ENCODE measurements at regions of chr7 and their contacts with region 1.

Region 1: GRCh38 chr7:33932832-33933468 is 27.6 kb downstream of the BMPER start:
- DNase-seq: no peak
- ATAC-seq: peak; percentile 79
- H3K4me3 ChIP-seq: no peak overlapping the region
- H3K27ac ChIP-seq: no peak overlapping the region
- H3K4me1 ChIP-seq: no peaks in the 10 kb centered on the region
- H3K27me3 ChIP-seq: peaks cover 1% of the 10 kb centered on the region in 2 experiments; a peak in 3 of 4 replicates
- CTCF ChIP-seq: peak; percentile 89 to 94 (median 90)
- EP300 ChIP-seq: no peak
- POLR2A ChIP-seq: no peak
- RAD21 ChIP-seq: peak; percentile 73

Region 2: DNA sequence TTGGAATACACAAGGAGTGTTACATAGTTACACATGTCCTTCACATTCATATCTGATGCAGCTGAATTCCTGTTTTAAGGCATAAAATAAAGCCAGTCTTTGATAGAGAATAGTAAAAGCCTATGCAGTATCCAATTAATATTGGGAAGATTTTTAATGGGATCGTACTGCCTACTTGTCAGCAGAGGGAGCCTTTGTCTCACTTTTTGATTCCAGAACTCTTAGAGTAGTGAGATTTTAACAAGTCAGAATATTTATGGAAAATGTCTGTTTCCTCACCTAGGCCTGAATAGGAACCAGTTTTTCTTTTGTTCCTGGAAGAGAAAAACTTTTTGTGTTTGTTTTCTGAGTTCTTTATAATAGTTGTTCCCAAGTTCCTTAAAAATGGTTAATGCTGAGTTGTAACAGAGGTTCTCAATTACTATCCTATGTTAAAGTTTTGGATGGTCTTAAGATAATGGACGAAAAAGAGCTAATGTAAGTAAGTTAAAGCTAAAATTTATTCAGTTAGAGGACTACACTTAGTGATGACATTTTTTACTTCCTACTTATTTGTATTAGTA is 689.5 kb before region 1 on chr7:
- CTCF ChIA-PET with region 1: interaction called, 9 read pairs
- POLR2A ChIA-PET with region 1: no interaction called
- RAD21 ChIA-PET with region 1: interaction called, 5 read pairs
- SMC1A ChIA-PET with region 1: interaction called, 3 read pairs
- in situ Hi-C with region 1: loop called (anchors 10 kb)
- intact Hi-C with region 1: loop called (anchors 2 kb)
- DNase-seq: no peak
- ATAC-seq: peak; percentile 57
- H3K4me3 ChIP-seq: no peak overlapping the region
- H3K27ac ChIP-seq: no peak overlapping the region
- H3K4me1 ChIP-seq: no peaks in the 10 kb centered on the region
- H3K27me3 ChIP-seq: no peaks in the 10 kb centered on the region
- CTCF ChIP-seq: peak; percentile 34 to 59 (median 44); a peak in 4 of 6 replicates
- EP300 ChIP-seq: no peak
- POLR2A ChIP-seq: no peak
- RAD21 ChIP-seq: peak; percentile 71

Region 3: DNA sequence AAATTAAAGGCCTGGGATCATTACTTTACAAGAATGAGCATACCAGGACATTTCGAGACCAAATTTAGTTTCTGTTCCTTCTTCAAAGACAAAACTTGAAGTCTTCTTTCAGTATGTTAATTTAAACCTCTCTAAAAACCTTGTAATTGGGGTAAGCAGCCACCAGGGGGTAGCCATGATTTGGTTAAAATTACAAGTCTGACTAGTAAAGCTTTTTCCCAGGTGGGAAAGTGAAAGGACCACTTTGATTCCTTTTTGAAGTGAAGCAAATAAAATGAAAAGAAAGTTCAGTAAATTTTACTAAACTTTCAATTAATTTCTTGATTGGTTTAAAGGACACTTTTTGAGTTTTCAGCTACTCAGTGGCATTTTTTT is 509.3 kb before region 1 on chr7:
- CTCF ChIA-PET with region 1: interaction called, 25 read pairs
- POLR2A ChIA-PET with region 1: no interaction called
- RAD21 ChIA-PET with region 1: interaction called, 4 read pairs
- SMC1A ChIA-PET with region 1: interaction called, 6 read pairs
- in situ Hi-C with region 1: no loop called
- intact Hi-C with region 1: loop called (anchors 2 kb)
- DNase-seq: peak; percentile 24
- ATAC-seq: peak; percentile 94
- H3K4me3 ChIP-seq: no peak overlapping the region
- H3K27ac ChIP-seq: no peak overlapping the region
- H3K4me1 ChIP-seq: peaks cover 5% of the 10 kb centered on the region
- H3K27me3 ChIP-seq: no peaks in the 10 kb centered on the region
- CTCF ChIP-seq: peak; percentile 47 to 71 (median 59); a peak in 5 of 6 replicates
- EP300 ChIP-seq: no peak
- POLR2A ChIP-seq: no peak
- RAD21 ChIP-seq: peak; percentile 71

Region 4: DNA sequence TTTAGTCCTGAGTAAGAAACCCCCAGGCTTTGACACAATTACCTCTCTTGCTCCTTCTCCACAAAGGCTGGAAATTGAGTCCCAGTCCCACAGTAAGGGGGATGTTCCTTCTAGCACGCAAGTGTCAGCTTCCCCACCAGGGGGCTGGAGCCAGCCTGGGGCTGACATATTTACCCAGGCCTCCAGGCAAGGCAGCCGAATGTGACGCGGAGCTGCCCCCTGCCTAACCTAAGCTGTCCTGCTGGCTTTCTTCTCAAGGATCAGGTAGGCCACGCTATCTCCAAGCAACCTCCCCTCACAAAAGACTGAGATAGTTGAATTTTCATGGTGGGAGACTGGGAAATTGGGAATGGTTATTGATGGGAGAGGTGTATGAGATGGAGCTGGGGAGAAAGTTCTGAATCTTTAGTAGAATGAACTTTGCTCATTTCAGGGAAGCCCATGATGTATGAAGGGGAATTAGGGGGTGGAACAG is 46.8 kb before region 1 on chr7:
- CTCF ChIA-PET with region 1: no interaction called
- POLR2A ChIA-PET with region 1: no interaction called
- RAD21 ChIA-PET with region 1: no interaction called
- SMC1A ChIA-PET with region 1: no interaction called
- in situ Hi-C with region 1: no loop called
- intact Hi-C with region 1: no loop called
- DNase-seq: no peak
- ATAC-seq: no peak
- H3K4me3 ChIP-seq: no peak overlapping the region
- H3K27ac ChIP-seq: no peak overlapping the region
- H3K4me1 ChIP-seq: no peaks in the 10 kb centered on the region
- H3K27me3 ChIP-seq: 0 out of 4 replicates have a peak, but pooled peaks cover 0 to 2% of the 10 kb centered on the region in 2 experiments
- CTCF ChIP-seq: no peak
- EP300 ChIP-seq: no peak
- POLR2A ChIP-seq: no peak
- RAD21 ChIP-seq: no peak

Region 5: DNA sequence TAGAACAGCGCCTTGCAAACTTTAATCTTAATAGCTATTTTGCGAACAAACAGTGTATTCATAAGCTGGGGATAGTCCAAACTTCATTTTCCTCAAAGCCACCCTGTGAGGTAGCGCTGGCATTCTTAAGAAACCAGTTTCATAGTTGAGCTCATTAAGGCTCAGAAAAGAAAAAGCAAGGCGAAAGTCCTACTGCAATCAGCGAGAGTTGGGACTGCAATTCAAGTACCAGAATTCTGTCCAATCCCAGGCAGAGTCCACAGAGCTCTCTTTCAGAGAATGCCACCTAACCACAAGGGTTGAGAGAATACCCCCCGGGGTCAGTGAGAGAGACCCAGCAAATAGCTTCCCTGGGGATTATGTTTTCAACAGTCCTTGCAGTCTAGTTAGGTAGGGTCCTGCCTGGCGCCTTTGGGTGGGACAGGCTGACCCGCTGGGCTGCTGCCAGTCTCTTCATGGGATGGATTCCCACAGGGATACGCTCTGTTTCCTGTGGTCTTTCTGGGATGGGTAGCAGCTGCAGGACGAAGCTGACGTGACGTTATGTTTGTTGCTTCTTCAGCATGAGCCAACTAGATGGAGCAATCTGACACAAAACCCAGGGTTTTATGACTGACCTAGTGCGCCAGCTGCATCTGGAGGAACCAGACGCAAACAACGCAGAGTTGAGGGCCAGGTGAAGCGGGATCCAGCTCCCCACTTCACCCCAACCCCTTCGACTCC is 11.6 kb before region 1 on chr7:
- CTCF ChIA-PET with region 1: interaction called, 13 read pairs
- POLR2A ChIA-PET with region 1: interaction called, 3 read pairs
- RAD21 ChIA-PET with region 1: no interaction called
- SMC1A ChIA-PET with region 1: interaction called, 5 read pairs
- in situ Hi-C with region 1: no loop called
- intact Hi-C with region 1: no loop called
- DNase-seq: no peak
- ATAC-seq: no peak
- H3K4me3 ChIP-seq: no peak overlapping the region
- H3K27ac ChIP-seq: no peak overlapping the region
- H3K4me1 ChIP-seq: no peaks in the 10 kb centered on the region
- H3K27me3 ChIP-seq: no peaks in the 10 kb centered on the region; a peak in 1 of 4 replicates
- CTCF ChIP-seq: no peak
- EP300 ChIP-seq: no peak
- POLR2A ChIP-seq: no peak
- RAD21 ChIP-seq: no peak

Region 6: DNA sequence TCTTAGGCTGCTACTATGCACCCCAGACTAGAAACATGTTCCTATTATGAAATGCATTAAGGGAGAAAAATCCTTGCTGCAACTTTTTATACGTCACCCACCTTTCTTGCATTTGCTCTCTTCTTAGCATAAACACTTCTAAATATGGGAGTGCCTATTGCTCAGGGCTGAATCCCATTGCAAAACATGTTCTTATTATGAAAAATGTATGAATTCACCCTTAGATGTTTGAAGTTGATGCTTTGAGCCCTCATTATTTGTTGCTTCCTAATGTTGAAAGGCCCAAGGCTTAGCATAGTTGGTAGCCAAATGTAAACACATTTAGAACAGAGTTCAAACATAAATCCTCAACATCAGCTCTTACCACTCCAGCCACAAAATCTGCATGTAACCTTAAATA is 25.2 kb after region 1 on chr7:
- CTCF ChIA-PET with region 1: interaction called, 12 read pairs
- POLR2A ChIA-PET with region 1: no interaction called
- RAD21 ChIA-PET with region 1: no interaction called
- SMC1A ChIA-PET with region 1: no interaction called
- in situ Hi-C with region 1: no loop called
- intact Hi-C with region 1: no loop called
- DNase-seq: no peak
- ATAC-seq: no peak
- H3K4me3 ChIP-seq: no peak overlapping the region
- H3K27ac ChIP-seq: no peak overlapping the region
- H3K4me1 ChIP-seq: no peaks in the 10 kb centered on the region
- H3K27me3 ChIP-seq: no peaks in the 10 kb centered on the region
- CTCF ChIP-seq: no peak
- EP300 ChIP-seq: no peak
- POLR2A ChIP-seq: no peak
- RAD21 ChIP-seq: no peak

Region 7: GRCh38 chr7:33986941-33987588 is 54.1 kb after region 1 on chr7:
- CTCF ChIA-PET with region 1: no interaction called
- POLR2A ChIA-PET with region 1: no interaction called
- RAD21 ChIA-PET with region 1: no interaction called
- SMC1A ChIA-PET with region 1: no interaction called
- in situ Hi-C with region 1: no loop called
- intact Hi-C with region 1: no loop called
- DNase-seq: no peak
- ATAC-seq: no peak
- H3K4me3 ChIP-seq: no peak overlapping the region
- H3K27ac ChIP-seq: no peak overlapping the region
- H3K4me1 ChIP-seq: no peaks in the 10 kb centered on the region
- H3K27me3 ChIP-seq: no peaks in the 10 kb centered on the region
- CTCF ChIP-seq: no peak
- EP300 ChIP-seq: no peak
- POLR2A ChIP-seq: no peak
- RAD21 ChIP-seq: no peak

Measured in GM12878 (cell line).